ENCODE measurements at regions of chr16 and their contacts with region 1.

Region 1: DNA sequence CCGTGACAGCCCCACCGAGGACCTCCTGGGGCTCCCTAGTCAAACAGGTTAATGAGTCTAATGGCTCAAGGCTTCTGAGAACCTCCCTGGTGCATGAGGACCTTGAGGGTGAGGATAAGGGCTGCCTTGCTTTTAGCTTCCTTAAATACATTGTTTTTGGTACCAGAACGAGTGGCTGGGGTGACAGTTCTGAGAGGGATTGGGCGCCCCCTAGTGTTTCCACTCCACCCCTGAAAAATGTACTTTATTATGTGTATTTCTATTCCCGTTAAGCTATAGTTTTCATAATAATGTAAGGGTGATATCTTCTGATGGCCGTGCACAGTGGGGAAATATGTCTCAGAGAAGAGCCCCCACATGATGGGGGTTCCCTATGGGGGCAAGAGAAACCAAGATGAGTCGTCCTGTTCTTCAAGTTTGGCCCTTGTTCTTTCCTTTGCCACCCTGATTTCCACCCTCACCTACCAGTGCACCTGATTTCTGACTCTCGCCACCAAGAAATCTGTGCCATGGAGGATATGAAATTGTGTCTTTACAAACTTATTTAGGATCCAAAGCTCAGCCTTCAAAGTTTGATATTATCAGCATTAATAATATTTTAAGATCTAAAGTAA is 14.5 kb upstream of the VWA3A start:
- DNase-seq: peak; percentile 37 to 78 (median 70)
- ATAC-seq: peak; percentile 69
- H3K4me3 ChIP-seq: no peak overlapping the region
- H3K4me3 Mint-ChIP-seq: no peak overlapping the region
- H3K27ac ChIP-seq: no peak overlapping the region
- H3K27ac Mint-ChIP-seq: no peak overlapping the region
- H3K4me1 ChIP-seq: no peaks in the 10 kb centered on the region
- H3K4me1 Mint-ChIP-seq: peaks cover 3% of the 10 kb centered on the region
- H3K27me3 ChIP-seq: no peaks in the 10 kb centered on the region
- H3K27me3 Mint-ChIP-seq: no peaks in the 10 kb centered on the region
- CTCF ChIP-seq: peak; percentile 78

Region 2: DNA sequence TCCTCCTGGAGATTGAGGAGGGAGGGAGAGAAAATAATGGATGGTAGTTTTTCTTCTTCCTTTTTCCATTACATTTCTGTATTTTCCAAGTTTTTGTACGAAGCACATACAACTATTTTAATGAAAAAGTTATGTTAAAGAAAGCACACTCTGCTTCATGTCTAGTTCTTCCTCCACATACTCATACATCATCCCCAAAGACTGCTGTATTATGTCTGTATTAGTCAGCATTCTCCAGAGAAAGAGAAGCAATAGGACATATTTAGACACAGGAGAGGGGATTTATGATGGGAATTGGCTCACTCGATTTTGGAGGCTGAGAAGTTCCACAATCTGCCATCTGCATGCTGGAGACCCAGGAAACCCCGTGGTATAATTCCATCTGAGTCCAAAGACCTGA is 1636.6 kb before region 1 on chr16:
- CTCF ChIA-PET with region 1: no interaction called
- POLR2A ChIA-PET with region 1: no interaction called
- intact Hi-C with region 1: no loop called
- DNase-seq: no peak
- ATAC-seq: no peak
- H3K4me3 ChIP-seq: no peak overlapping the region
- H3K4me3 Mint-ChIP-seq: no peak overlapping the region
- H3K27ac ChIP-seq: no peak overlapping the region
- H3K27ac Mint-ChIP-seq: no peak overlapping the region
- H3K4me1 ChIP-seq: no peaks in the 10 kb centered on the region
- H3K4me1 Mint-ChIP-seq: no peaks in the 10 kb centered on the region
- H3K27me3 ChIP-seq: no peaks in the 10 kb centered on the region
- H3K27me3 Mint-ChIP-seq: peaks cover 2% of the 10 kb centered on the region
- CTCF ChIP-seq: no peak

Region 3: GRCh38 chr16:21703589-21704174 is 374.1 kb before region 1 on chr16:
- CTCF ChIA-PET with region 1: no interaction called
- POLR2A ChIA-PET with region 1: no interaction called
- intact Hi-C with region 1: no loop called
- DNase-seq: no peak
- ATAC-seq: no peak
- H3K4me3 ChIP-seq: no peak overlapping the region
- H3K4me3 Mint-ChIP-seq: no peak overlapping the region
- H3K27ac ChIP-seq: no peak overlapping the region
- H3K27ac Mint-ChIP-seq: no peak overlapping the region
- H3K4me1 ChIP-seq: peaks cover 3% of the 10 kb centered on the region
- H3K4me1 Mint-ChIP-seq: peaks cover 2% of the 10 kb centered on the region
- H3K27me3 ChIP-seq: no peaks in the 10 kb centered on the region
- H3K27me3 Mint-ChIP-seq: no peaks in the 10 kb centered on the region
- CTCF ChIP-seq: no peak

Region 4: GRCh38 chr16:21952793-21953540 is 124.8 kb before region 1 on chr16 and contains the start of gene UQCRC2:
- CTCF ChIA-PET with region 1: interaction called, 8 read pairs
- POLR2A ChIA-PET with region 1: no interaction called
- intact Hi-C with region 1: loop called in 1 of 2 experiments (anchors 5 kb)
- DNase-seq: peak; percentile 70 to 96 (median 87)
- ATAC-seq: peak; percentile 89
- H3K4me3 ChIP-seq: peak within 1 kb of the TSS; percentile 85 to 87
- H3K4me3 Mint-ChIP-seq: peak within 1 kb of the TSS; percentile 100
- H3K27ac ChIP-seq: peak within 1 kb of the TSS; percentile 93 to 95
- H3K27ac Mint-ChIP-seq: peak within 1 kb of the TSS; percentile 98
- H3K4me1 ChIP-seq: peaks cover 36% of the 10 kb centered on the region
- H3K4me1 Mint-ChIP-seq: peaks cover 69% of the 10 kb centered on the region
- H3K27me3 ChIP-seq: no peaks in the 10 kb centered on the region
- H3K27me3 Mint-ChIP-seq: no peaks in the 10 kb centered on the region
- CTCF ChIP-seq: no peak
- total RNA-seq, gene UQCRC2: 177 to 186 TPM

Region 5: DNA sequence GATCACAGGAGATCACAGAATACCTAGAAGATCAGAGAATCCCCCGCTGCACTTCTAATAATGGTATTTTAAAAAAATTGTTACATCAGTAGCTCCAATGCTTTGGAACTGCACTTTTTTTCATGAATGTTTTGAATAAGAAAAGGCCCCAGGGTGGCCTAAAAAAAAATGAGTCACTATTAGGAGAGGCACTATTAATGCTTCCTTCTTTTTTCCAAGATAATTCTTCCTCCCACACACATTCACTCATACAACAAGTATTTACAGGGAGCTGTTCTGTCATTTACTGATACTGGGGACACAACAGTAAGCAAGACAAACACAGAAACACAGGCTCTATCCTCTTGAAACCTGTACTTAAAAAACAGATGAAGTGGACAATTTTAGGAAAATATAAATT is 76.2 kb before region 1 on chr16:
- CTCF ChIA-PET with region 1: interaction called, 158 read pairs
- POLR2A ChIA-PET with region 1: interaction called, 4 read pairs
- intact Hi-C with region 1: loop called (anchors 1 kb)
- DNase-seq: no peak
- ATAC-seq: no peak
- H3K4me3 ChIP-seq: no peak overlapping the region
- H3K4me3 Mint-ChIP-seq: no peak overlapping the region
- H3K27ac ChIP-seq: no peak overlapping the region
- H3K27ac Mint-ChIP-seq: no peak overlapping the region
- H3K4me1 ChIP-seq: peaks cover 11% of the 10 kb centered on the region
- H3K4me1 Mint-ChIP-seq: peaks cover 11% of the 10 kb centered on the region
- H3K27me3 ChIP-seq: no peaks in the 10 kb centered on the region
- H3K27me3 Mint-ChIP-seq: no peaks in the 10 kb centered on the region
- CTCF ChIP-seq: no peak

Region 6: DNA sequence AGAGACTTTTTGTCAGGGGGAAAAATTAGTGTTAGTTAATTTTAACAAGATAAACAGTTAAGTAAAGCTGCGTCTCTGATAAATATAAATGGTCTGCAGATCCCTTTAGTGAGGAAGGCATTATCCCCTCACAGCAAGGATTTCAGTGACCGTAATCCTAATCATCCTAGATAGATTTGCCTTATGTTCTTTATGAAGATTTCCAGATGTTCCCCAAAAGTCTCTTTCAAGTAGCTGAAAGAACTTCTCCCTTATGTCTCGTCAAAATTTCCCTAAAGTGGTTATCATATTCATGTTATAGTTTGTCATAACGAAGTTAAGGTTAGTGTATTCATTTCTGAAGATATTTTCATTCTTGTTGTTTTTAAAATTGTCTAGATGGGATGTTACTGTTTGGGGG is 64.3 kb before region 1 on chr16:
- CTCF ChIA-PET with region 1: interaction called, 16 read pairs
- POLR2A ChIA-PET with region 1: no interaction called
- intact Hi-C with region 1: no loop called
- DNase-seq: no peak
- ATAC-seq: no peak
- H3K4me3 ChIP-seq: no peak overlapping the region
- H3K4me3 Mint-ChIP-seq: no peak overlapping the region
- H3K27ac ChIP-seq: no peak overlapping the region
- H3K27ac Mint-ChIP-seq: no peak overlapping the region
- H3K4me1 ChIP-seq: peaks cover 17% of the 10 kb centered on the region
- H3K4me1 Mint-ChIP-seq: peaks cover 75% of the 10 kb centered on the region
- H3K27me3 ChIP-seq: no peaks in the 10 kb centered on the region
- H3K27me3 Mint-ChIP-seq: no peaks in the 10 kb centered on the region
- CTCF ChIP-seq: no peak

Region 7: GRCh38 chr16:22063888-22064467 is 13.8 kb before region 1 on chr16:
- CTCF ChIA-PET with region 1: interaction called, 21 read pairs
- POLR2A ChIA-PET with region 1: no interaction called
- intact Hi-C with region 1: no loop called
- DNase-seq: no peak
- ATAC-seq: no peak
- H3K4me3 ChIP-seq: no peak overlapping the region
- H3K4me3 Mint-ChIP-seq: no peak overlapping the region
- H3K27ac ChIP-seq: no peak overlapping the region
- H3K27ac Mint-ChIP-seq: peak overlapping the region; percentile 7
- H3K4me1 ChIP-seq: no peaks in the 10 kb centered on the region
- H3K4me1 Mint-ChIP-seq: no peaks in the 10 kb centered on the region
- H3K27me3 ChIP-seq: no peaks in the 10 kb centered on the region
- H3K27me3 Mint-ChIP-seq: no peaks in the 10 kb centered on the region
- CTCF ChIP-seq: no peak

Region 8: GRCh38 chr16:22098405-22099255 is 20.8 kb after region 1 on chr16:
- CTCF ChIA-PET with region 1: interaction called, 35 read pairs
- POLR2A ChIA-PET with region 1: no interaction called
- intact Hi-C with region 1: no loop called
- DNase-seq: peak in 2 of 9 experiments; percentile 53 to 65
- ATAC-seq: peak; percentile 69
- H3K4me3 ChIP-seq: no peak overlapping the region
- H3K4me3 Mint-ChIP-seq: no peak overlapping the region
- H3K27ac ChIP-seq: no peak overlapping the region
- H3K27ac Mint-ChIP-seq: no peak overlapping the region
- H3K4me1 ChIP-seq: no peaks in the 10 kb centered on the region
- H3K4me1 Mint-ChIP-seq: peaks cover 2% of the 10 kb centered on the region
- H3K27me3 ChIP-seq: peaks cover 0 to 6% of the 10 kb centered on the region in 2 experiments
- H3K27me3 Mint-ChIP-seq: peaks cover 23% of the 10 kb centered on the region
- CTCF ChIP-seq: peak; percentile 44

Region 9: DNA sequence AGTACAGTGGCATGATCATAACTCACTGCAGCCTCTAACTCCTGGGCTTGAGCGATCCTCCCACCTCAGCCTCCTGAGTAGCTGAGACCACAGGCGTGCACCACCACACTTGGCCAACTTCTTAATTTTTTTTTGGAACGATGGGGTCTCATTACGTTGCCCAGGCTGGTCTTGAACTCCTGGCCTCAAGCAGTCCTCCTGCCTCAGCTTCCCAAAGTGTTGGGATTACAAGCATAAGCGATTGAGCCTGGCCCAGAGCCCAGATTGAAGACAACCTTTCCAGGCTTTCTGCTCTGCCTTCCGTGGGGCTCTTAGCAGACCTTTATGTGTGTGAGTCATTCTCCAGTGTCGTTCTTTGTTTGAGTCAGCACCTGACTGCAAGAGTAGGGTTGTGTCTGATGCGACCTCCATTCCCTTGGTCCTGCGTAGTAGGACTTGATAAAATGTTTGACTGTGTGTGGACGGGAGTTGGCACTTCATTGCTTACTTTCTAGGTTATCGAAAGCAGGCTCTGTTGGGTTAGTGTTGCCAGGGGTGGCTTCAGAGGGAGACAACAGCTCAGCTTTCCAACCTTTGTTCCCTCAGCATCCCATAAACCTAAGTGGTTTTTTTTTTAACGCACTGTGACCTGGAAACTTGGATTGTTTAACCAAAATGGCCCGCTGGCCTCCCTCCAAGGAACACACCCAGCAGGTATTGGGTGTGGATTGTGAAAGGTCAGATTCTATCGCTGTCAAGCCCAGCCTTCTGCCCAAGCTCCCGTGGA is 154.7 kb after region 1 on chr16:
- CTCF ChIA-PET with region 1: no interaction called
- POLR2A ChIA-PET with region 1: no interaction called
- intact Hi-C with region 1: no loop called
- DNase-seq: no peak
- ATAC-seq: no peak
- H3K4me3 ChIP-seq: no peak overlapping the region
- H3K4me3 Mint-ChIP-seq: no peak overlapping the region
- H3K27ac ChIP-seq: no peak overlapping the region
- H3K27ac Mint-ChIP-seq: no peak overlapping the region
- H3K4me1 ChIP-seq: no peaks in the 10 kb centered on the region
- H3K4me1 Mint-ChIP-seq: no peaks in the 10 kb centered on the region
- H3K27me3 ChIP-seq: no peaks in the 10 kb centered on the region
- H3K27me3 Mint-ChIP-seq: no peaks in the 10 kb centered on the region
- CTCF ChIP-seq: no peak